ENCODE measurements at regions of chr1 and their contacts with region 1.

Region 1: GRCh38 chr1:54996359-54996868 is 2.3 kb upstream of the BSND start:
- DNase-seq: peak; percentile 92
- CTCF ChIP-seq: peak; percentile 88

Region 2: DNA sequence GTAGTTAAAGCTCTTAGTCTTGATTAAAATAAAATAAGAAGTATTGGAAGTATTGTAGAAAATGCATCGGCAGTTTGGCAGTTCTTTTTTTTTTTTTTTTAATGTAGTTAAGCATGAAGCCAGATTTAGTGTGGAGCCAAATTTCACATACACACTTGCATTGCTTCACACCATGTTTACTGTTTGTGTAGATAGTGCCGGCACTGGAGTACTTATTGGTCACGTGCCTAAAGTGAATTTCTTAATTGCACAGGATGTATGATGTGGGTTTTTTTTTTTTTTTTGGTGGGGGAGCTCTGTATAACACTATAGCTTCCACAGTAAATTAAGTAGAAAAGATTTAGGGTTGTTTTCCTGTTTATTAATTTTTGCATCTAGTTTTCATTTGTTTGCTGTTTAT is 37.2 kb before region 1 on chr1:
- CTCF ChIA-PET with region 1: interaction called, 609 read pairs
- POLR2A ChIA-PET with region 1: no interaction called
- DNase-seq: no peak
- CTCF ChIP-seq: no peak

Region 3: DNA sequence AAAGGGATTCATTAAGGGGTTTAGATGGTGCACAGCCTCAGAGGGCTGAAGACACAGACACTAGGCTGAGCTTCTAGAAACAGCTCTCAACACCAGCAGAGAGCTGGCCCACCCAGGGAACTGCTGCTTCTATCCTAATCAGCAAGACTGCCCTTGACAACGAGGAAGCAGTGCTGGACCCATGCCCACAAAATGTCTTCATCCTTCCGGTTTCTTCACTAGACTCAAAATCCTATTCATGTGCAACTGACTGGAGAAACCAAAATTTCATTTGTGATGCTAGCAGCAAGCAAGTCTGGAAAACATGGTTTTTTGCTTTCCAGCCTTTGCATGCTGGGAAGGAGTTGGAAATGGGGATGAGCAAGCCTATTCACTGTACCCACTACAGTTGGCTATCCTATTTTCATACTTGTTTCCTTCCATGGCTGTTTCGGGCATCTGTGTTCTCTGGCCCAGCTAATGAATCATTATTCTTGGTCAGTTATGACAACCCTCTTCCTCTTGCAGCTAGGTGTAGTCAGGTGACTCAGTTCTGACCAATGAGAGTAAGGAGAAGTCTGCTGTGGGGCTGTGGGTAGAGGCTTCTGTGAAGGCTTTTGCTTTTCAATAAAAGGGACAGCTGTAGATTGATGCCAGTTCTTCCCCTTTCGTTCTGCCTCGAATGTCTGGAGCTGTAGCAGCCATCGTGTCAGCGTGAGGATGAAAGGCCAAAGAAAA is 30.6 kb before region 1 on chr1:
- CTCF ChIA-PET with region 1: interaction called, 23 read pairs
- POLR2A ChIA-PET with region 1: no interaction called
- DNase-seq: peak; percentile 40
- CTCF ChIP-seq: no peak

Region 4: GRCh38 chr1:54973205-54973921 is 23.1 kb before region 1 on chr1:
- CTCF ChIA-PET with region 1: interaction called, 25 read pairs
- POLR2A ChIA-PET with region 1: no interaction called
- DNase-seq: peak; percentile 10
- CTCF ChIP-seq: peak; percentile 3

Region 5: GRCh38 chr1:55007625-55008024 is 11.2 kb after region 1 on chr1:
- CTCF ChIA-PET with region 1: interaction called, 22 read pairs
- POLR2A ChIA-PET with region 1: no interaction called
- DNase-seq: no peak
- CTCF ChIP-seq: no peak

Region 6: DNA sequence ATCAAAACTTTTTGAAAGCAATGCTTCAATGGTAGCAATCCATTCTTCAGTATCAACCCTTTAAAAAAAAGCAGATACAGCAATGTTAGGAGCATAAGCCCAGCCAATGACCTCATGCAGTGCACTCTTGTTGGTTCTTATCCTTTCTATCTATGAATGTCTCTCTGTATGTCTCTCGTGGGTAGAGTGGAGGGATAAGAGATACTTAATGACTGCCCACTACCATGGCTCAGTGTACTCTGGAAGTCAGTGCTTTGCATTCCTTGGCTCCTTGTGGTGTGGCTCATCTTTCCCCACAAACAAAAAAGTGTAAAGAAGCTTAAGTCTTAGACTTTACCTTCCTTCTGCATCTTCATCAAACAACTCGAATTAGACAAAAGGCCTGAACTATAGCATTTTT is 93.3 kb after region 1 on chr1:
- CTCF ChIA-PET with region 1: no interaction called
- POLR2A ChIA-PET with region 1: no interaction called
- DNase-seq: no peak
- CTCF ChIP-seq: no peak

Region 7: GRCh38 chr1:55107101-55107500 is 110.7 kb after region 1 on chr1:
- CTCF ChIA-PET with region 1: no interaction called
- POLR2A ChIA-PET with region 1: no interaction called
- DNase-seq: no peak
- CTCF ChIP-seq: no peak

Measured in GM10248 (cell line).